ENCODE measurements at regions of chr15 and their contacts with region 1.

Region 1: DNA sequence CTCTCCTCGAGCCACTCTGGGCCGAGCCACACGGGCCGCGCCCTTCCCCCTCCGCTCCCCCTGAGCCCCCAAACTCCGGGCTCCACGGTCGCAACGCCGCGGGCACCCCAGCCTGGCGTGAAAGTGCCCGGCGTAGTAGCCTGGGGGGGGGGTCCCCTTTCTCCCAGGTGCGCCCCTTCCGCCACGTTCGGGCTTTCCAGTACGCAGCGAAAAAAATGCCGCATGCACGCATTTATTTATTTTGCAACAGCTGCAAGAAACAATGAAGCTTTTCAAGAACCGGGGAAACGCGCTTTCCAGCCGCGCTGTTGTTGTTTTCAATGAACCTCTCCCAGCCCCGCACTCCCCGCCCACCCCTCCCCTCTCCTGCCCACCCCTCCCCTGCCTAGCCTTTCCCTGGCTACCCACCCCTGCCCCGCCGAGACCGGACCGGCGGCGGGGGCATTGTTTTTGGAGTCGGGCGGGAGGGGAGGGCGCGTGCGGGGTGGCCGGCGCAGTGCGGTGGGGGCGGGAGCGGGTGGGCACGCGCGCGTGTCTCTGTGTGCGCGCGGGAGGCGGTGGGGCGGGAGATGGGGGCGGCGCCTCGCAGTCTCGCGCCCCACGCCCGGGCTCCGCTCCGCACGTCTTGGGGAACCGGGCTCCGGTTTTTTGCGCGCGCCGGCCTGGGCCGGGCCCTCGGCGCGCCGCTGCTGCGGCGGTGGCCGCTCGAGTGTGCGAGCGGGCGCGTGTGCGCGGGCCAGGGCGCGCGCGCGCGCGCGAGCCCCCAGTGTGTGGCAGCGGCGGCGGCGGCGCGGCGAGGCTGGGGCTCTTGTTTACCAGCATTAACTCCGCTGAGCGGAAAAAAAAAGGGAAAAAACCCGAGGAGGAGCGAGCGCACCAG is at the start of gene IGF1R:
- DNase-seq: peak; percentile 92
- H3K4me3 ChIP-seq: peak within 1 kb of the TSS; percentile 78 to 83
- H3K27ac ChIP-seq: peak within 1 kb of the TSS; percentile 93 to 94
- H3K4me1 ChIP-seq: no peaks in the 10 kb centered on the region
- H3K27me3 ChIP-seq: no peaks in the 10 kb centered on the region
- CTCF ChIP-seq: peak in 2 of 3 experiments; percentile 2 to 3
- POLR2A ChIP-seq: no peak
- total RNA-seq, gene IGF1R: 157 to 172 TPM

Region 2: GRCh38 chr15:98850961-98851573 is 203.1 kb after region 1 on chr15:
- intact Hi-C with region 1: no loop called
- DNase-seq: peak; percentile 87
- H3K4me3 ChIP-seq: no peak overlapping the region
- H3K27ac ChIP-seq: peak overlapping the region; percentile 89 to 97
- H3K4me1 ChIP-seq: peaks cover 41% of the 10 kb centered on the region
- H3K27me3 ChIP-seq: no peaks in the 10 kb centered on the region
- CTCF ChIP-seq: peak; percentile 50 to 69 (median 52)
- POLR2A ChIP-seq: no peak

Region 3: DNA sequence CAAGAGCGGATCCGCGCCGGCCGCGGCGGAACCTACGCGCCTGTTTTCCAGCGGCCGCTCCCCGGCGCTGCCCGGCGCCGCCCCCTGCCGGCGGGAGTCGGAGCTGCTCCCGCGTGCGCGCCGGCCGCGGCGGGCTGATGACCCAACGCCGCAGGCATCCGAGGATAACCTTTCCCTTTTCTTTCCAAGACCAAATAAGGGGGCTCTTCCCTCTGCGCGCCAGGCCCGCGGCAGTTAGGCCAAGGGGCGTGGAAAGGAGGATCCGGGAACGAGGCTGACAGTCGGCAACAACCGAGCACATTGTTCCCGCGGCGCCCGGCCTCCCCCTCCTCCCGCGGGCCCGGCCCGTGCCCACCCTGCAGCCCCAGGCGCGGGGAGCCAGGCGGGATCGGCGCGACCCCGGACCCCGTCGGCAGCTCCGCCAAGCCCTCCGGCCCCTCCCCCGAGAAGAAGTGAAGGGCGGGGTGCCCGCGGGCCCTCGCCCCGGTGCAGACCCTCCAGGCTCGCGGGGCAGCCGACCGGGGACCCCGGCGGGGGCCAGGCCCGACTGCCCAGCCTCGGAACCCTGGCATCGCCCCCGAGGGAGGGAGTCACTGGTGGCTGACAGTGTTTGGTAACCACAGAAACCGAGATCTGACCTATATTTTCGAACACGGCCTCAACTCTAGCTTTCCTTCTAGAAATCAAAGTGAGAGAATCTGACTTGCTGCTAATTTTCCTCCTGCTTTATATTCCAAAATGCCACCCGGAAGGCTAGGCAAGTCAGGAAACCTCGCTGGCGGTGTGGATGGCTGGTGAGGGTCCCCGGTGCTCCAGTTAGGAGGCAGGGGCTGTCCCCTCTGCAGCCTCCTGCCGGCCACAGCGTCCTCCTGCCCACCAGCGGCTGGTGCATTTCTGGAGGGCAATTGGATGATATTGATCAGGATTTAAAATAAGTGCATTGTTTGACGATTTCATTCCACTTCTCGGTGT is 411.3 kb after region 1 on chr15:
- intact Hi-C with region 1: loop called (anchors 5 kb)
- DNase-seq: peak; percentile 79
- H3K4me3 ChIP-seq: peak overlapping the region; percentile 48 to 63
- H3K27ac ChIP-seq: peak overlapping the region; percentile 41 to 70
- H3K4me1 ChIP-seq: peaks cover 6% of the 10 kb centered on the region
- H3K27me3 ChIP-seq: no peaks in the 10 kb centered on the region
- CTCF ChIP-seq: peak; percentile 72 to 92 (median 79)
- POLR2A ChIP-seq: no peak

Measured in testis (tissue), 5 donors.